ENCODE measurements at regions of chr14 and their contacts with region 1.

Region 1: GRCh38 chr14:30855345-30856037 is 18.9 kb upstream of the COCH start:
- DNase-seq: no peak
- ATAC-seq: no peak
- H3K4me3 ChIP-seq: no peak overlapping the region
- H3K27ac ChIP-seq: no peak overlapping the region
- H3K4me1 ChIP-seq: no peaks in the 10 kb centered on the region
- CTCF ChIP-seq: no peak
- EP300 ChIP-seq: no peak
- POLR2A ChIP-seq: no peak
- RAD21 ChIP-seq: no peak

Region 2: DNA sequence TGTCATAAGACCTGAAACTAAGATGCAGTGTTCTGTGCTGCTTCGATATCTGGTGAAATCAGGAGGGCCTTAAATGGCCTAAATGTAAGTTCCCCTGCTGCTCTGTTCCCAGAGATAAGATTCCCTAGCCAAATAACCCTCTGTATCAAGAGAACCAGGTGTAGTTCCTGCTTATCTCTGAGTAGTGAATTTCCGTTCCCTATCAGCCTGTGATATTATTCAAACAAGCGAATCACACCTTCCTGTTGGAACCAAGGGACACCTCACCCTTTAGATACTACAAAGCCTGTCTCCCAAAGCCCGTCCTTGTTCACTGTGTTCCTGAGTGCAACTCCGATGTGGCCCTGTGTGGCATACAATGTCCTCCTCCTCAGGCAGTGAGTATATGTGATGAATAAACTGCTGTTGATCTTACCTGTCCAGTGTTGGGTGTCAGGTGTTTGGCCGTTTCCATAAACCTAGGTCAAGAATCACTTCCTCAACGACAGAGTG is 33.4 kb before region 1 on chr14:
- CTCF ChIA-PET with region 1: no interaction called
- POLR2A ChIA-PET with region 1: no interaction called
- DNase-seq: no peak
- ATAC-seq: no peak
- H3K4me3 ChIP-seq: no peak overlapping the region
- H3K27ac ChIP-seq: no peak overlapping the region
- H3K4me1 ChIP-seq: no peaks in the 10 kb centered on the region
- CTCF ChIP-seq: no peak
- EP300 ChIP-seq: no peak
- POLR2A ChIP-seq: no peak
- RAD21 ChIP-seq: no peak

Region 3: DNA sequence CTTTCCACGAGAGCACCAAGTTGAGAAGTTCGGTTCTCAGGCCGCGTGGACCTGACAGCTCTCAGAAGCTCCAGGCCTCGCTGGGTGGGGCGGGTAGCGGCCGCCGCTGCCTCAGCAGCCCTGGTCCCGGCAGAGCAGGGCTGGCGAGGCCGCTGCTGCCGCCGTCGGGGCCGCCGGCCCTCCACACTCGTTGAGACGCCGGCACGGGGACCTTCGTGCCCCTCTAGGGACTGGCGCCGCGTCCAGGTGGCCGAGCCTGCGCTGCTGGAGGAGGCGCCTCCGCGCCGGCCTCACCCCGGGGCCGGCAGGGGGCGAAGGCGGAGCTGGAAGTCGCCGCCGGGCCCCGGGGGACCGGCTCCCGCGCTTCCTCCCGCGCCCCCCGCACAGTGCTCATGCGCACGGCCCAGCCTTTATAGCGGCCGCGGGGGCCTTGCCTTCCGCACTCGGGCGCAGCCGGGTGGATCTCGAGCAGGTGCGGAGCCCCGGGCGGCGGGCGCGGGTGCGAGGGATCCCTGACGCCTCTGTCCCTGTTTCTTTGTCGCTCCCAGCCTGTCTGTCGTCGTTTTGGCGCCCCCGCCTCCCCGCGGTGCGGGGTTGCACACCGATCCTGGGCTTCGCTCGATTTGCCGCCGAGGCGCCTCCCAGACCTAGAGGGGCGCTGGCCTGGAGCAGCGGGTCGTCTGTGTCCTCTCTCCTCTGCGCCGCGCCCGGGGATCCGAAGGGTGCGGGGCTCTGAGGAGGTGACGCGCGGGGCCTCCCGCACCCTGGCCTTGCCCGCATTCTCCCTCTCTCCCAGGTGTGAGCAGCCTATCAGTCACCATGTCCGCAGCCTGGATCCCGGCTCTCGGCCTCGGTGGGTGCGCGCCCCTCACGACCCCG is 18.9 kb after region 1 on chr14 and contains the start of gene COCH:
- CTCF ChIA-PET with region 1: interaction called, 10 read pairs
- POLR2A ChIA-PET with region 1: interaction called, 3 read pairs
- DNase-seq: peak; percentile 63 to 74
- ATAC-seq: peak; percentile 88 to 94
- H3K4me3 ChIP-seq: peak within 1 kb of the TSS; percentile 86
- H3K27ac ChIP-seq: peak within 1 kb of the TSS; percentile 75 to 90
- H3K4me1 ChIP-seq: 0 out of 3 replicates have a peak, but pooled peaks cover 4% of the 10 kb centered on the region
- CTCF ChIP-seq: peak; percentile 43; the same call in 2 of the 3 replicates
- EP300 ChIP-seq: no peak
- POLR2A ChIP-seq: peak; percentile 66
- RAD21 ChIP-seq: peak in 1 of 2 experiments; percentile 42; a peak in 3 of 5 replicates
- polyA plus RNA-seq, gene COCH: 45.9 and 53.1 TPM in 2 replicates